ENCODE measurements at regions of chr20 and their contacts with region 1.

Region 1: DNA sequence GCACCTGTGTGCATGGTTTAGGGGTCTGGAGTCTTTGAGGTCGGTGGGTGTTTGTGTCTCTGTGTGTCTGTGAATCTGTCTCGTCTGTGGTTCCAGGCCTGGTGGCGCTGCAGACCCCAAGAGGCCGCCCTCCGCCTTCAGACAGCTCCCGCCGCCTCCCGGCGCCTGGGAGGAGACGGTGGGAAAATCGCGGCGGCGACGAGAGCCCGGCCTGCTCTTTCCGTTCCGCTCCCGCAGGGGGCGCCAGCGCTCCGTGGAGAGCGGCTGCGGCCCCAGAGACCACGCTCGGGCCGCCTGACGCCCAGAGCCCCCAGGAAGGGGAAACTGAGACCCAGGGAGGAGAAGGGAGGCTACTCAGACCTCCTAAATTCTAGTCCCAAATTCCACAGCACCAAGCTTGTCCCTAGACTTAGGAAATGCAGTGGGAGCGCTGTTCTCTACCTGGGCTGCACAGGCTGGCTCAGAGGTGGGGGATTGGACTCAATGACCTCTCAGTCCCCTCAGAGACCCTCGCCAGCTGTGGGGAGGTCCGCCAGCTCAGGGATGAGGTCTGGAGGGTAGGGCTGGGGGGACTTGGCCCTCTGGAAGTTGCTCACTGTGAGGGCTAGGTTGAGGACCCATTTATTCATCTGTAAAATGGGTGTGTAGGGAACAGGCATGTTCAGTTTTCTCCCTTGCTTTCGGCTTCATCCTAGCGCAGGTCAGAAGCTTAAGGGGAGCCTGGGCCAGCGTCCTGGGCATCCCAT is 36.9 kb upstream of the BLCAP start:
- DNase-seq: peak; percentile 70
- H3K4me3 ChIP-seq: no peak overlapping the region
- H3K27ac ChIP-seq: no peak overlapping the region
- H3K4me1 ChIP-seq: no peaks in the 10 kb centered on the region
- H3K27me3 ChIP-seq: peaks cover 40% of the 10 kb centered on the region

Region 2: DNA sequence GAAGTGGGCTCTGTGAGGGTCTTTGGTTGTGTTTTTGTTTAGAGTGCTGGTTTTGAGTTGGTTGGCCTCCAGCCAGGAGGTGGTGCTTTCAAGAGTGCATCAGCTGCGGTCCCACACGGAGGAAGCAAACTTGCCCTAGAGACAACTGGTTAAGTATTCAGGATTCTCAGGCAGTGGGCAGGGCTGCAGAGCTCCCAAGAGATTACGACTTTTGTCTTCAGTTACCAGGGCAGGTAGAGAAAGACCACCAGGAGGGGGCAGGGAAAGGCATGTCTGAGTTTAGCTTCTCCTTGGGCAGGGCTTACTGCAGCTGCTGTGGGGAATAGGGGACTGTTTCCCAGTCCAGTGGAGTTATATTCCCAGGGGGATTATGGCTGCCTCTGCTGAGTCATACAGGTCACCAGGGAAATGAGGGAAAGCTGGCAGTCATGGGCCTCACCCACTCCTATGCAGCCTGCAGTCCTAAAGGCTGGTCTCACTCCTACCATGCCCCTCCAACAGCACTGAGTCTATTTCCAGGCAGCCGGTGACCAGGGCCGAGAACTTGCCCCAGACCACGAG is 404.4 kb after region 1 on chr20:
- in situ Hi-C with region 1: no loop called
- DNase-seq: peak; percentile 18
- H3K4me3 ChIP-seq: no peak overlapping the region
- H3K27ac ChIP-seq: no peak overlapping the region
- H3K4me1 ChIP-seq: peaks cover 9% of the 10 kb centered on the region; the same call in 1 of the 2 replicates
- H3K27me3 ChIP-seq: peaks cover 10% of the 10 kb centered on the region; the same call in 1 of the 2 replicates

Region 3: GRCh38 chr20:37999526-38000263 is 435.1 kb after region 1 on chr20:
- in situ Hi-C with region 1: loop called (anchors 5 kb)
- DNase-seq: no peak
- H3K4me3 ChIP-seq: no peak overlapping the region
- H3K27ac ChIP-seq: no peak overlapping the region
- H3K4me1 ChIP-seq: peaks cover 16% of the 10 kb centered on the region
- H3K27me3 ChIP-seq: no peaks in the 10 kb centered on the region

Measured in GM23248 (cell line).